Breast epithelium (tissue), 4 donors: ENCODE measurements at regions of chr11 and their contacts with region 1.

Region 1: DNA sequence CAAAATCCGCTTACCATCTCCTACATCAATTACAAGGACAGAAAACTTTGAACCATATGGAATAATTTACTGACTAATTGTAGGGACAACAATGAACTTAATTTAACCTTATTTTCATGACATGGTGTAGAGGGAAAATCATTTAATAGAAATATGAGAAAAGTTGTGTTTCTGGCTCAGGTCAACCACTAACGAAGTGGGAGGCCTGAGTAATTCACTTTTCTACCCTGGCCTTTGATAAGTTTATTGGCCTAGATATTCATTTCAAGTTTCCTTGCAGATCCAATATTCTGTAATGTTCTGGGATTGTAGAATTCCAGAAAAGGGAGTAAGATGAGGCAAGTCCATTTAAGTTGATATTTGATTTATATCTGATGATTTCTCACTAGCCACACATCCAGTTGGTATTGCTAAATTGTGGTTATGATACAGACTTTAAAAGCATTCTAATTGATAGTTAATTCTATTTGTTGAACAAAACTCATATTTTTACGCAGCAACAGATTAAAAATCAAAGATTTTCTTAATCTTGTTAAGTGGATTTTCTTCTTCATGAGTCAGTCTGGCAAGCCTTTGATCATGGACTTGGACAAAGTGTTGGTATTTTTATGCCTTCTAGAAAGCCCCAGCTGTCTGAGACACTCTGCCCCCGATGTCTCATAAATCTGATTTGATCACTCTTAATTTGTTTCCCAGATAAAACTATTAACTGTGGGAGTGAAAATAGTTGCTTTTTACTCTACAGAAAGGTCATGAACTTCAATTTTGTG is 336.5 kb downstream of the TMEM135 start:
- DNase-seq: no peak
- H3K4me3 ChIP-seq: no peak overlapping the region
- H3K27ac ChIP-seq: no peak overlapping the region
- H3K4me1 ChIP-seq: no peaks in the 10 kb centered on the region
- H3K27me3 ChIP-seq: no peaks in the 10 kb centered on the region
- CTCF ChIP-seq: no peak
- POLR2A ChIP-seq: no peak

Region 2: DNA sequence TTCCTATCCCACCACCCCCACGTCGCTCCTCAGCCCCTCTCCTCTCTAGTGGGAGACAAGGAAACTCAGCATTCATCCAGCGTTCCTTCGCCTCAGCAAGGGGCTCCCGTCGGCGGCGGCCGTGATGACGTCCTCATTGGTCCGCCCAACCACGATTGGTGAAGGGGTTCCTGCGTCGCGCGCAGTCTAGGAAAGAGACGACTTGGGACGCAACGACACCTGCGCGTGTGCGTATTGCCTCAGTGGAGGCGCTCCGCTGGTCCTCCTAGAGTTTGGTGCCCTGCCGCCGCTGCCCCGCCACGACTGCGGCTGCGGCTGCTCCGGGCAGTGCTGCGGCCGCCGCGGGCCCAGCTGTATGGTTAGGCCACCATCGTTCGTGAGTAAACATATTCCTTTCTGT is 943.0 kb before region 1 on chr11:
- intact Hi-C with region 1: loop called (anchors 5 kb)
- DNase-seq: no peak
- H3K4me3 ChIP-seq: no peak overlapping the region
- H3K27ac ChIP-seq: no peak overlapping the region
- H3K4me1 ChIP-seq: no peaks in the 10 kb centered on the region
- H3K27me3 ChIP-seq: no peaks in the 10 kb centered on the region
- CTCF ChIP-seq: no peak
- POLR2A ChIP-seq: no peak

Region 3: DNA sequence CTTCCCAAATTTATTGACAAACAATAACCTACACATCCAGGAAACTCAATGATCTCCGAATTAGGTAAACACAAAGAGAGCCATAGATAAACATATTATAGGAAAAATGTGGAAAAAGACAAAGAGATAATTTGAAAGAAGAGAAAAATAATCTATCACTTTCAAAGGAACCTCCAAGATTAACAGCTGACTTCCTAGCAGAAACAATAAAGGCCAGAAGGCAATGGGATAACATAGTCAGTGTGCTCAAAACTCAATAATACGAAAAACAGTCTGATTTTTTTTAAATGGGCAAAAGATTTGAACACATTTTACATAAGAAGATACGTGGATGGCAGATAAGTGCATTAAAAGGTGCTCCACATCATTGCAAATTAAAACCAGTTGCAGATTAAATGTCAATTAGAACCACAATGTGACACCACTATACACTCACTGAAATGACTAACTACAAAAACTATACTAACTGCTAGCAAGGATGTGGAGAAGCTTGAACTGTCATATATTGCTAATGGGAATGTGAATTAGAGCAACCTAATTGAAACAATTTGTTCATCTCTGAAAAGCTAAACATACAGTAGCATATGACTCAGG is 36.1 kb before region 1 on chr11:
- intact Hi-C with region 1: loop called (anchors 2 kb)
- DNase-seq: no peak
- H3K4me3 ChIP-seq: no peak overlapping the region
- H3K27ac ChIP-seq: no peak overlapping the region
- H3K4me1 ChIP-seq: no peaks in the 10 kb centered on the region
- H3K27me3 ChIP-seq: no peaks in the 10 kb centered on the region
- CTCF ChIP-seq: no peak
- POLR2A ChIP-seq: no peak